Gastrocnemius medialis (tissue), 4 donors: ENCODE measurements at regions of chr22 and their contacts with region 1.

Region 1: GRCh38 chr22:50250555-50251476 is at the start of gene HDAC10:
- DNase-seq: peak in 1 of 2 donors; percentile 43
- ATAC-seq: peak; percentile 11 to 30
- H3K4me3 ChIP-seq: peak within 1 kb of the TSS; percentile 59 to 68 (median 62)
- H3K27ac ChIP-seq: peak within 1 kb of the TSS; percentile 62 to 97 (median 75)
- H3K4me1 ChIP-seq: peaks cover 18 to 30% of the 10 kb centered on the region in 2 donors
- H3K27me3 ChIP-seq: no peaks in the 10 kb centered on the region
- CTCF ChIP-seq: no peak
- POLR2A ChIP-seq: no peak
- total RNA-seq, gene HDAC10: 4.1 to 24.9 (median 8.6) TPM

Region 2: DNA sequence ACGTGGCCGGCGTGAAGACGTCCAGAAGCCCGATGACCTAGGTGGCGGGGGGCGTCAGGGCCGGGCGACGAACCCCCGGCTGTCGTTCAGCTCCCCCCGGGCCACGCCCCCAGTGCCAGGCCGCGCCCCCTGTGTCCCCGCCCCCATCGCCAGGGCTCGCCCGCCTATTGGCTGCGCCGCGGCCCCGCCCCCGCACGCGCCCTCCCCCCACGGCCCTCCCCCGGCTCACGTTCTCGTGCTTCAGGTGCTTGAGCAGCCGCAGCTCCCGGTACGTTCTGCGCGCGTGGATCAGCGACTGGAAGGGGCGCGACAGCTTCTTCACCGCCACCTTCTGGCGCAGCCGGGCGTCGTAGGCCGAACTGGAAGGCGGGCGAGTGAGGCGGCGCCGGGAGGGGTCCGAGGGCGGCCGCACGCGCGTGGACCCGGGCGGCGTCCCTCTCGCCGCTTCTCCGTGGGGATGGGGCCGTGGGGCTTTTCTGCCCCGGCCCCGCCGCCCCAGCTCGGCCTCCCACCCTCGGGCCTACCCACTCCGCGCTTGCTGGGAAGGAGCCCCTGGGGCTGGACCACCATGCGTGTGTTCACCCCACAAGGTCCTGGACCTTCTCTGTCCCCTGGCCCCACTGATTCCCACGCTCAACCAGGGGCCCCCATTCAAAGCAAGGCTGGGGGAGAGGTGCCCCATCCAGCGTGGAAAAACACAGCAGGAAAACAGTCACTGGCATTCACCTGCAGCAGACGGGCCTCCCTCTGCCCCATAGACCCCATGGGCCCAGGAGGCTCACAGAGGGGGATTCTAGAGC is 17.0 kb after region 1 on chr22:
- in situ Hi-C with region 1: no loop called
- intact Hi-C with region 1: loop called (anchors 1 kb)
- DNase-seq: peak; percentile 81 to 88
- ATAC-seq: peak; percentile 70 to 77
- H3K4me3 ChIP-seq: peak overlapping the region; percentile 41 to 58 (median 48)
- H3K27ac ChIP-seq: peak overlapping the region; percentile 34 to 54 (median 44)
- H3K4me1 ChIP-seq: peaks cover 30 to 47% of the 10 kb centered on the region in 2 donors
- H3K27me3 ChIP-seq: peaks cover 4 to 12% (median 9%) of the 10 kb centered on the region in 3 donors
- CTCF ChIP-seq: peak in 4 of 5 experiments; percentile 56 to 68 (median 61)
- POLR2A ChIP-seq: peak in 1 of 2 donors; percentile 17